T-cell (primary cell): ENCODE measurements at regions of chr3 and their contacts with region 1.

Region 1: GRCh38 chr3:161163297-161163696 is 57.8 kb upstream of the NMD3 start:
- DNase-seq: no peak
- ATAC-seq: no peak
- H3K4me3 ChIP-seq: no peak overlapping the region
- H3K4me3 Mint-ChIP-seq: no peak overlapping the region
- H3K27ac ChIP-seq: no peak overlapping the region
- H3K27ac Mint-ChIP-seq: no peak overlapping the region
- H3K4me1 ChIP-seq: no peaks in the 10 kb centered on the region
- H3K4me1 Mint-ChIP-seq: no peaks in the 10 kb centered on the region
- H3K27me3 ChIP-seq: peaks cover 0 to 5% of the 10 kb centered on the region in 2 experiments
- H3K27me3 Mint-ChIP-seq: peaks cover 0 to 6% of the 10 kb centered on the region in 2 donors

Region 2: GRCh38 chr3:161177996-161178395 is 14.7 kb after region 1 on chr3:
- CTCF ChIA-PET with region 1: interaction called in 1 of 2 experiments, 3 read pairs
- POLR2A ChIA-PET with region 1: interaction called in 1 of 2 experiments, 11 read pairs
- DNase-seq: no peak
- ATAC-seq: no peak
- H3K4me3 ChIP-seq: no peak overlapping the region
- H3K4me3 Mint-ChIP-seq: no peak overlapping the region
- H3K27ac ChIP-seq: no peak overlapping the region
- H3K27ac Mint-ChIP-seq: no peak overlapping the region
- H3K4me1 ChIP-seq: no peaks in the 10 kb centered on the region
- H3K4me1 Mint-ChIP-seq: no peaks in the 10 kb centered on the region
- H3K27me3 ChIP-seq: peaks cover 0 to 3% of the 10 kb centered on the region in 2 experiments
- H3K27me3 Mint-ChIP-seq: peaks cover 16 to 21% of the 10 kb centered on the region in 2 donors